BJ (cell line): ENCODE measurements at regions of chr12 and their contacts with region 1.

Region 1: DNA sequence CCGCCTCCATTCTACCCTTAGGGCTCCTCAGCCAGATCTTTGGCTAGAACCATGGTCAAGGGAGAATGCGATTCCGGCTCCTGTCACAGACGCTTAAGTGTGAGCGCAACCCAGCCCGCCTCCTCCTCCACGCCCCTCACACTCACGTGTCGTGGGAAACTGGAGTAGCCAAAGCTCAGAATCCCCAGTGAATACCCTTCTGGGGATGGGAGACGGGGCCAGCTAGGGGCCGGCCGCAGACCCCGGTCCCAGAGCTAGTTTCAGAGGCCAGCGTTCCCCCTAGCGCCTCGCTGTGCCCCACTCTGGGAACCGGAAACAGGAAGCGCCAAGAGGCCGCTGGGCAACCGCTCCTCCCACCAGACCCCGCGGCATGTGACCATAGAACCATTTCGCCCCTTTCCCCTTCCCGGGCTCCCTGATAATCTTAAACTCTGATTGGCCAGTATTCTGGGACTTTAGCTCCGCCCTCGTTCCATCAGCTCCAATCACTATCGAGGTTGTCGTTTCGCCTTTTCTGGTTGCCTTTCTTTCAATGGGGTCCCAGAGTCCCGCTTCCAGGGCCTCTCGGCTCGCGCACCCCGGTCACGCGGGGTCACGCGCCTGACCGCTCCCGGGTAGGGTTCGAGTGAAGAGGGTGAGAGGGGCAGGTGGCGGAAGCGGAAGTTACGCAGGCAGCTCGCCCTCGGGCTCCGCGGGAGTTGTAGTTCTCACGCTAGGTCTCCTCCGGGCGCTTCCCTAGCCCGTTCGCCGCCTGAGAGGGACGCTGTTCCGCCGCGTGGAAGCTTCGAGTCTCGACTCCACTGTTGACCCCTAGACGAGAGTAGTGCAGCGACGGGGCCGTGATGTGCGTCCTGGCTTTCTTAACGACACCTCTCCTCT is at the start of gene M6PR:
- DNase-seq: peak; percentile 78
- H3K4me3 ChIP-seq: peak within 1 kb of the TSS; percentile 91
- H3K27me3 ChIP-seq: no peaks in the 10 kb centered on the region
- CTCF ChIP-seq: peak; percentile 71
- polyA plus RNA-seq, gene M6PR: 106 and 125 TPM in 2 replicates

Region 2: GRCh38 chr12:8823565-8824300 is 125.8 kb before region 1 on chr12:
- CTCF ChIA-PET with region 1: no interaction called
- POLR2A ChIA-PET with region 1: interaction called, 10 read pairs
- DNase-seq: no peak
- H3K4me3 ChIP-seq: no peak overlapping the region
- H3K27me3 ChIP-seq: no peaks in the 10 kb centered on the region
- CTCF ChIP-seq: peak; percentile 67